ENCODE measurements at regions of chr11 and their contacts with region 1.

Region 1: GRCh38 chr11:94593030-94593429 is 25.9 kb downstream of the PIWIL4 start:
- DNase-seq: no peak
- H3K4me3 ChIP-seq: no peak overlapping the region
- H3K27ac ChIP-seq: no peak overlapping the region
- H3K4me1 ChIP-seq: no peaks in the 10 kb centered on the region
- H3K27me3 ChIP-seq: no peaks in the 10 kb centered on the region

Region 2: GRCh38 chr11:94472916-94473799 is 119.9 kb before region 1 on chr11:
- CTCF ChIA-PET with region 1: no interaction called
- POLR2A ChIA-PET with region 1: no interaction called
- DNase-seq: peak; percentile 76 to 96 (median 95)
- H3K4me3 ChIP-seq: peak overlapping the region in 4 of 7 experiments; percentile 17 to 54 (median 26)
- H3K27ac ChIP-seq: peak overlapping the region; percentile 3 to 47
- H3K4me1 ChIP-seq: peaks cover 14 to 29% (median 24%) of the 10 kb centered on the region in 4 experiments
- H3K27me3 ChIP-seq: no peaks in the 10 kb centered on the region

Region 3: GRCh38 chr11:94511932-94512781 is 80.9 kb before region 1 on chr11 and contains the start of gene C11orf97:
- CTCF ChIA-PET with region 1: interaction called, 109 read pairs
- POLR2A ChIA-PET with region 1: no interaction called
- DNase-seq: peak; percentile 53 to 74 (median 66)
- H3K4me3 ChIP-seq: peak within 1 kb of the TSS; percentile 40 to 78 (median 66)
- H3K27ac ChIP-seq: no peak within 1 kb of the TSS
- H3K4me1 ChIP-seq: peaks cover 0 to 18% (median 16%) of the 10 kb centered on the region in 4 experiments
- H3K27me3 ChIP-seq: peaks cover 0 to 2% (median 0%) of the 10 kb centered on the region in 5 experiments

Region 4: DNA sequence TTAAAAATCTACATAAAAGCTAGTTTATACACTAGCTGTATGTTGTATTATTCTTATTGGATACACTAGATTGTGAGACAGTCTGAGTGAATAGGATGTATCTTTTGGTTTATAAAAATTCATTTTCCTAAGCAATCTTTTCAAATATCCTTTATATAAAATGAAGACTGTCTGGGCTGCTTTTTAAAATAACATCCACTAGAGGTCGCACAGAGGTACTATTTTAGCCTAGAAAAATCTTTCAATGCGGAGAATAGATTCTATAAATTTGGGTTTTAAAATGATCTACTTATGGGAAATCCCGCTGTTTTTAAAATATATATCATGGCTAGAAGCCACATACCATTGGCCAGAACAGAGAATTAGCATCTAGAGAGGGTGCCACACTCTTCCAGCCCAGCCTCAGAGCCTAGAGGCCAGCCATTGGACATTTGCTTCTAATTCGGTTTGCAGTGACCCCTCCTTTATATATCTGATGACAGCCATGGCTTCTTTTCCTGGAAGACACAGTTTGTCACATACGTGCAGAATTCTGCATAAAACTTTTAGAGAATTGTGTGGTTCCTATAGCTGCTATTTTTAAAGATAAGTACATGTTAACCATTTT is 73.4 kb before region 1 on chr11:
- CTCF ChIA-PET with region 1: interaction called, 109 read pairs
- POLR2A ChIA-PET with region 1: interaction called, 3 read pairs
- DNase-seq: peak; percentile 25 to 65 (median 52)
- H3K4me3 ChIP-seq: no peak overlapping the region
- H3K27ac ChIP-seq: no peak overlapping the region
- H3K4me1 ChIP-seq: no peaks in the 10 kb centered on the region
- H3K27me3 ChIP-seq: peaks cover 0 to 2% (median 0%) of the 10 kb centered on the region in 5 experiments

Region 5: DNA sequence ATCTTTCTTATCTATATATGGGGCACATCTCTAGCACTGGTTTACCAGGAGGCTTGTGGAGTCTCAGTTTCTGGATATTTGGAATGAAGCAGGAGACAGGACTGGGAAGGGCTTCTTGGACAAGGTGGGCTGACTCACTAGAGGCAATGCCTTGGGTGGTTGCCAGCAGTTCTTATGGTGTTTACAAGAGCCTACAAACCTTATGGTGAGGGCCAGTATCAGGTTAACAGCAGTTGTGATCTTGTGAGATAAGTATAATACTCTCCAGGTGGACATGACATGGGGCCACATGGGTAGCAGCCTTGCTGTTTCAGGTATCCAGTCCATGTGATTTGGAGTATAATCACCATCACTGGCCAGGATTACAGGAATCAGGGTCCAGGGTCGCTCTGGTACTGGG is 39.1 kb before region 1 on chr11:
- CTCF ChIA-PET with region 1: interaction called, 10 read pairs
- POLR2A ChIA-PET with region 1: no interaction called
- DNase-seq: no peak
- H3K4me3 ChIP-seq: no peak overlapping the region
- H3K27ac ChIP-seq: no peak overlapping the region
- H3K4me1 ChIP-seq: peaks cover 9 to 26% (median 15%) of the 10 kb centered on the region in 4 experiments
- H3K27me3 ChIP-seq: no peaks in the 10 kb centered on the region

Measured in common myeloid progenitor, CD34-positive (primary cell).